Dorsolateral prefrontal cortex (tissue), 120 donors: ENCODE measurements at regions of chr1 and their contacts with region 1.

Region 1: GRCh38 chr1:180631766-180632325 is at the start of gene XPR1:
- DNase-seq: peak; percentile 91 to 99 (median 98)
- H3K4me3 ChIP-seq: peak within 1 kb of the TSS; percentile 56 to 100 (median 91)
- H3K27ac ChIP-seq: peak within 1 kb of the TSS; percentile 39 to 97 (median 88)
- H3K27me3 ChIP-seq: no peaks in the 10 kb centered on the region
- CTCF ChIP-seq: peak in 51 of 56 donors; percentile 5 to 60 (median 40)
- total RNA-seq, gene XPR1: 18.3 to 47.9 (median 30.6) TPM

Region 2: GRCh38 chr1:180502360-180503273 is 129.2 kb before region 1 on chr1 and contains the start of gene ACBD6:
- intact Hi-C with region 1: loop called in 1 of 2 experiments (anchors 5 kb)
- DNase-seq: peak; percentile 71 to 91 (median 82)
- H3K4me3 ChIP-seq: peak within 1 kb of the TSS; percentile 66 to 100 (median 91)
- H3K27ac ChIP-seq: peak within 1 kb of the TSS; percentile 73 to 98 (median 93)
- H3K27me3 ChIP-seq: no peaks in the 10 kb centered on the region
- CTCF ChIP-seq: peak in 37 of 56 donors; percentile 6 to 50 (median 26)
- total RNA-seq, gene ACBD6: 31.2 to 64.0 (median 43.3) TPM

Region 3: GRCh38 chr1:180515864-180516388 is 115.9 kb before region 1 on chr1:
- intact Hi-C with region 1: loop called in 1 of 2 experiments (anchors 5 kb)
- DNase-seq: peak in 7 of 10 donors; percentile 61 to 76 (median 72)
- H3K4me3 ChIP-seq: peak overlapping the region in 1 of 59 donors; percentile 33
- H3K27ac ChIP-seq: peak overlapping the region in 29 of 59 donors; percentile 1 to 72 (median 28)
- H3K27me3 ChIP-seq: no peaks in the 10 kb centered on the region
- CTCF ChIP-seq: peak; percentile 73 to 98 (median 88)

Region 4: GRCh38 chr1:180533266-180533987 is 98.4 kb before region 1 on chr1:
- intact Hi-C with region 1: loop called (anchors 5 to 10 kb)
- DNase-seq: peak in 9 of 10 donors; percentile 31 to 73 (median 60)
- H3K4me3 ChIP-seq: peak overlapping the region in 24 of 59 donors; percentile 2 to 49 (median 24)
- H3K27ac ChIP-seq: peak overlapping the region in 2 of 59 donors; percentile 9 to 15
- H3K27me3 ChIP-seq: no peaks in the 10 kb centered on the region
- CTCF ChIP-seq: peak; percentile 58 to 93 (median 84)

Region 5: GRCh38 chr1:180849036-180849775 is 217.4 kb after region 1 on chr1:
- intact Hi-C with region 1: loop called in 1 of 2 experiments (anchors 10 kb)
- DNase-seq: no peak
- H3K4me3 ChIP-seq: no peak overlapping the region
- H3K27ac ChIP-seq: no peak overlapping the region
- H3K27me3 ChIP-seq: no peaks in the 10 kb centered on the region
- CTCF ChIP-seq: no peak

Region 6: DNA sequence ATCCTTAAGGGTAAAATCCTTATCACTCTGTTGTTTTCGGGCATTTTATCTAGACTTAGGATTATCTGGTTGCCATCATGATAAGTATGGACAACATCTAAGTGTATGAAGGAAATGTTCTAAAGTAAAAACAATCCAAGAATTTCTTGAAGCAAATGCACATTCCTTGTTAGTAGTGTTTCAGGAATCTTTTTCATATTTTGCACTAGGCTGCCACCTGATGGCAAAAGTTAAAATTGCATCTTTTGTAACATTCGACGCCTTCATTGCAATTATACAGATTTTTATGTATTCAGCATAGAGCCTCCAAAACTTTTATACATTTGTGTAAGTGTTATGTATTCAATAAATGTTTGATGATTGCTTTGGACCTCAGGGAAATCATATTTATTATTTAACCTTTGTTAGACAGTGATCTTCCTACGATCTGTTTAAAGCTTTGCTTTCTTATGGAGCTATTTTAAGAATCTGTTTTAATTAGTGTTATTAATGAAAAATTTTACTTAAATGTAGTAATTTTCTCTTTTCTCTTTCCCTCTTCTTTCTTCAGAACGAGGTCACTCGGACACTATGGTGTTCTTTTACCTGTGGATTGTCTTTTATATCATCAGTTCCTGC is 231.4 kb after region 1 on chr1:
- intact Hi-C with region 1: loop called in 1 of 2 experiments (anchors 5 kb)
- DNase-seq: peak in 1 of 10 donors; percentile 16
- H3K4me3 ChIP-seq: no peak overlapping the region
- H3K27ac ChIP-seq: no peak overlapping the region
- H3K27me3 ChIP-seq: no peaks in the 10 kb centered on the region
- CTCF ChIP-seq: peak; percentile 80 to 99 (median 89)

Region 7: GRCh38 chr1:181134543-181135362 is 502.9 kb after region 1 on chr1:
- intact Hi-C with region 1: loop called in 1 of 2 experiments (anchors 10 kb)
- DNase-seq: peak in 1 of 10 donors; percentile 39
- H3K4me3 ChIP-seq: no peak overlapping the region
- H3K27ac ChIP-seq: peak overlapping the region in 40 of 59 donors; percentile 1 to 79 (median 48)
- H3K27me3 ChIP-seq: no peaks in the 10 kb centered on the region
- CTCF ChIP-seq: no peak